MCF 10A (cell line): ENCODE measurements at regions of chr16 and their contacts with region 1.

Region 1: GRCh38 chr16:50806099-50807062 is 64.5 kb downstream of the CYLD start:
- DNase-seq: peak; percentile 90
- H3K4me3 Mint-ChIP-seq: peak overlapping the region; percentile 61
- H3K27ac Mint-ChIP-seq: no peak overlapping the region
- H3K4me1 Mint-ChIP-seq: no peaks in the 10 kb centered on the region
- H3K27me3 Mint-ChIP-seq: no peaks in the 10 kb centered on the region
- CTCF ChIP-seq: peak; percentile 78

Region 2: DNA sequence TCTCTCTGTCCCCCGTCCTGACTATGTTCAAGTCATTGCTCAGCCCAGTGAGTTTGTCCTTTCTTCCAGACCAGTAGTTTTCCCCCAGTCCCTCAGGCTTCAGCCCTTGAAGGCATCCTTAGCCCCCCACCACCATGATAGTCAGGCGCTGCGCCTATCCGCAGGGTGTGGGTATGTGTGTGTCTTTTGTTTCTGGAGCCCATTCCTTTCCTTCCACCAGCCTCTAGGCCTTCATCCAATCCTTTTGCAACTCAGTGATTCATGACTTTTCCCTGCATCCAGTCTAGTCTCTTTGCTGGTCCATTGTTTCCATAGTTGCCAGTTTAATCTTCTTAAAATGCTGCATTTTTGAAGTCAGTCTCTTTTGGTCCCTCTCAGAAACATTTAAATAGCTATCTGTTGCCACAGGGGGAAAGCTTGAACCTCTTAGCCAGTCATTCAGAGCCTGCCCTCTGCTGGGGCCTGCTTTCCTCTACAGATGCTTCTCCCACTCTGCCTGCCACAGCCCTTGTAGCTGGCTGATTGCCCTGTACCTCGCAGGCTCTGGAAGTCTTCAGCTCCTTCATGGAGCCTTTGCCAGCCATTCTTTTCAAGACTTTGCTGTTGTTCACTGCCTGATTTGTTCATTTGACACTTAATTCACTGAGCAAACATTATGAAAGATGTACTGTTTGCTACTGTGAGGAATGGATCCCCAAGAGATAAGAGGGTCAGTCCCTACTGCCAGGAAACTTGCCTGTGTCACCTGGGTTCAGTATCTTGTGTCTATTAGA is 595.9 kb before region 1 on chr16:
- CTCF ChIA-PET with region 1: interaction called, 7 read pairs
- POLR2A ChIA-PET with region 1: no interaction called
- intact Hi-C with region 1: loop called (anchors 5 kb)
- DNase-seq: peak; percentile 72
- H3K4me3 Mint-ChIP-seq: no peak overlapping the region
- H3K27ac Mint-ChIP-seq: peak overlapping the region; percentile 65
- H3K4me1 Mint-ChIP-seq: peaks cover 32% of the 10 kb centered on the region
- H3K27me3 Mint-ChIP-seq: no peaks in the 10 kb centered on the region
- CTCF ChIP-seq: peak; percentile 68

Region 3: DNA sequence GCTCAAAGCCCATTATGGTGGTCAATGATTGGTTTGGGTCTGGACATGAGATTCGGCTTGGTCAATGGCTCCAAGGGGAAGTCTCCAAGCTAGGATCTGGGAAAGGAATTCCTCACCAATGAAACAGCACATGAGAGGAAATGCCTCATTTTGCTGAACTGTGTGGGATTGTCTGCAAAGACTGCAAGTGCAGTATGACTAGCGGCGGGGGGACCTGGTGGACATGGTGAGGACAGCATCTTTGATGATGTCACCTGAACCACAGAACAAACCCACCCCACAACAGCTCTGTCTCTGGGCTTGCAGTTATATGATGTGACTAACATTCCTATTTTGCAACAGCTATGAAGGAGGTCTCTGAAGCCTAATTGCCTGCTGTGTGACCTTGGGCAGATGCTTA is 308.8 kb before region 1 on chr16:
- CTCF ChIA-PET with region 1: no interaction called
- POLR2A ChIA-PET with region 1: no interaction called
- intact Hi-C with region 1: no loop called
- DNase-seq: no peak
- H3K4me3 Mint-ChIP-seq: no peak overlapping the region
- H3K27ac Mint-ChIP-seq: no peak overlapping the region
- H3K4me1 Mint-ChIP-seq: no peaks in the 10 kb centered on the region
- H3K27me3 Mint-ChIP-seq: no peaks in the 10 kb centered on the region
- CTCF ChIP-seq: no peak

Region 4: GRCh38 chr16:50665128-50665878 is 141.1 kb before region 1 on chr16:
- CTCF ChIA-PET with region 1: interaction called, 68 read pairs
- POLR2A ChIA-PET with region 1: no interaction called
- intact Hi-C with region 1: no loop called
- DNase-seq: peak; percentile 69
- H3K4me3 Mint-ChIP-seq: peak overlapping the region; percentile 62
- H3K27ac Mint-ChIP-seq: peak overlapping the region; percentile 39
- H3K4me1 Mint-ChIP-seq: no peaks in the 10 kb centered on the region
- H3K27me3 Mint-ChIP-seq: no peaks in the 10 kb centered on the region
- CTCF ChIP-seq: peak; percentile 83

Region 5: DNA sequence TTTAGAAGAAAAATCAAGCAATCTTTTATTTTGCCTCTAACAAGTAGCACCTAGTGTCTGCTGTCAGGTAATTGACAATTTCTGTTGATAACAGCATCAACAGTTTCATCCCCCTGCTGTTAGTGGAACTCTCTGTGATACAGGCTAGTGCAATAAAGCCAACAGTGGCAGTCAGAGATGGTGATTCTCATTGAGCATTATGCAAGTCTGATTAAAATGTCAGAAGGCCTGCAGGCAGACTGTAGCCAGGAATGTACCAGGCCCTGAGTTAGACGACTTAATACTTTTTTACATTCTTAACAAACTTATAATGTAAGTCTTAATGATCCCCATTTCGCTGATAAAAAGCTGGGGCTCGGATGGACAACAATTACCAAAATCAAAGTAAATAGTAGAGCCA is 49.9 kb before region 1 on chr16:
- CTCF ChIA-PET with region 1: interaction called, 12 read pairs
- POLR2A ChIA-PET with region 1: no interaction called
- intact Hi-C with region 1: no loop called
- DNase-seq: no peak
- H3K4me3 Mint-ChIP-seq: no peak overlapping the region
- H3K27ac Mint-ChIP-seq: no peak overlapping the region
- H3K4me1 Mint-ChIP-seq: no peaks in the 10 kb centered on the region
- H3K27me3 Mint-ChIP-seq: no peaks in the 10 kb centered on the region
- CTCF ChIP-seq: no peak

Region 6: DNA sequence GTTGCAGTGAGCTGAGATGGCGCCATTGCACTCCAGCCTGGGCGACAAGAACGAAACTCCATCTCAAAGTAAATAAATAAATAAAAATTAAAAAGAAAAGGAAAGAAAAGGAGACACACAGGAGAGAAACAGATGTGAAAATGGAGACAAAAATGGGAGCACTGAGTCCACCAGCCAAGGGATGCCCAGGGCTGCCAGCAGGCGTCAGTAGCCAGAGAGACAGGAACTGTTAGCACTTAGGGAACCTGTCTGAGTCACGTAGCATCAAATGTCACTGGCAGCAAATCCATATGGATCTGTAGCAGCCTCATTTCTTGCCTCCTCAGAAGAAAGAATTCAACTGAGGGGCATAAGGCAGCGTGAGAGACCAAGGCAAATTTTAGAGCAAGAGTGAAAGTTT is 15.2 kb after region 1 on chr16:
- CTCF ChIA-PET with region 1: interaction called, 45 read pairs
- POLR2A ChIA-PET with region 1: no interaction called
- intact Hi-C with region 1: no loop called
- DNase-seq: peak; percentile 70
- H3K4me3 Mint-ChIP-seq: no peak overlapping the region
- H3K27ac Mint-ChIP-seq: no peak overlapping the region
- H3K4me1 Mint-ChIP-seq: no peaks in the 10 kb centered on the region
- H3K27me3 Mint-ChIP-seq: no peaks in the 10 kb centered on the region
- CTCF ChIP-seq: no peak

Region 7: DNA sequence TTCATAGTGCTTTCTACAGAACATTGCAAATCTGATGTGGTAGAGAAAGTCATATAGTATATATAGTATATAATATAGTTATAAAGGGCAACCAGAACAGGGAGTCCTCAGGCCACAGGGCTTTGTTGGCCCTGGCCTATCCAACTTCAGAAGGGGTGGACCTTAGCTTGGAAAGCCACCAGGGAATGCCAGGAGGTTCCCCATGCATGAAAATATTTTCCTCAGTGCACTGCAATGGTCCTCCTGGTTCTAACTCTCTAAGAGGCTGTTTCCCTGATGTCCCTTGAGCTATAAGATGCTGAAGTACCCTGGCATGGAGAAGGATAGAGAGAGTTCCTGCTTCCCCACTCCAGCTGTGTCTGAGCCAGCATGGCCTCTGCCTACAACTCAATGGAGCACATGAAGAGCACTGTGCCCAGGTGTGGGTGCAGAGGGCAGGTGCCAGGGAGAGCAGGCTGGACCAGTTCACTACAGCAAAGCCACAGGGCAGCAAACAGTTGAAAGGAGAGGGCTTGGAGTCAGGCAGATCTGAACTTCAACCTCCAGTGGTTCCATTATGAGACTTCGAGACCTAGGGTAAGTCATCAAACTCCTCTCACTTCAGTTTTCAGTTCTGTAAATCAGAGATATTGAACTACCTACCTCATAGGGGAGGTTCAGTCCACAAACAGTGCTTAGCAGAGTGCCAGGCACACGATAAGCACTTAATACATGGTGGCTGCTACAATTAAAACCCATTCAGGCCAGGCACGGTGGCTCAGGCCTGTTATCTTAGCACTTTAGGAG is 161.6 kb after region 1 on chr16:
- CTCF ChIA-PET with region 1: no interaction called
- POLR2A ChIA-PET with region 1: no interaction called
- intact Hi-C with region 1: no loop called
- DNase-seq: no peak
- H3K4me3 Mint-ChIP-seq: no peak overlapping the region
- H3K27ac Mint-ChIP-seq: no peak overlapping the region
- H3K4me1 Mint-ChIP-seq: no peaks in the 10 kb centered on the region
- H3K27me3 Mint-ChIP-seq: peaks cover 37% of the 10 kb centered on the region
- CTCF ChIP-seq: no peak

Region 8: DNA sequence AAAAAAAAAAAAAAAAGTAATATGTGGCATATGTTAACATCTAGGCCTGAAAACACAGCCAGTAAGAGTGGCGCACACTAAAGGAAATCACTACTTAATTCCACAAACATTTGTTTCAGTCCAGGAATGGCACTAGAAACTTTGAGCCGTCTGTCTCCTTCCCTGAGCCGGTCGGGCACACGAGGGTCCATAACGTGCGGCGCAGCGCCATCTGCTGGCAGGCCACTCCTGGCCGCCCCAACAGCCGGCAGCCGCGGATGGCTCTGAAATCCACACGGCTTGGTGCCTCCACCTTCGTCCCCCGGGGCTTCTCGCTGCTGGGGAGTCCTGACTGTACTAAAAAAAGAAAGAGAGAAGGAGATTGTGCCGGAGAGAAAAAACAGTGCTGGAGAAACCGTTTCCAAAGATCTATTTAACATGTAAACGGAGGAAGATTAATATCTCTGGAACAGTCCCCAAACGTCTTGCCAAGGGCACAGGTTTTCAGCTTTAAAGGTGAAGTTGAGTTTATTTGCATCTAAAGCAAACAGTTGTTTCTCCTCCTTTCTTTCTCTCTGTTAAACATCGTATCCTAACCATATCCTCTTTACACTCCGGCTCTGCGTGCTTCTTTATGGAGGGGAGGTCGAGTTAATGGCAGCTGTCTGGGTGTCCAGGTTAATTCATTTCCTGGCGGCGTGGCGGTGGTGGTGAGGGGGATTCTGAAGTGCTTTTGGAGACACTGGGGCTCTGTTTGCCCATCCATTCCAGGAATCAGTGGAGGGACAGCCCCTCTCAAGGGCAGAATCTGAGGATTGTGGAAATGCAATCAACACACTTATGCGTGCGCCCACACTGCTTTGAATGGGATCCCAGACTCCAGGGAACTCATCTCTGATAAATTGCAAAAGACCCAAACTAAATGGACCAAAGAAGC is 956.0 kb after region 1 on chr16:
- CTCF ChIA-PET with region 1: interaction called, 20 read pairs
- POLR2A ChIA-PET with region 1: no interaction called
- intact Hi-C with region 1: loop called (anchors 2 kb)
- DNase-seq: peak; percentile 76
- H3K4me3 Mint-ChIP-seq: no peak overlapping the region
- H3K27ac Mint-ChIP-seq: no peak overlapping the region
- H3K4me1 Mint-ChIP-seq: no peaks in the 10 kb centered on the region
- H3K27me3 Mint-ChIP-seq: no peaks in the 10 kb centered on the region
- CTCF ChIP-seq: peak; percentile 90